Endothelial cell of umbilical vein (primary cell): ENCODE measurements at regions of chr14 and their contacts with region 1.

Region 1: DNA sequence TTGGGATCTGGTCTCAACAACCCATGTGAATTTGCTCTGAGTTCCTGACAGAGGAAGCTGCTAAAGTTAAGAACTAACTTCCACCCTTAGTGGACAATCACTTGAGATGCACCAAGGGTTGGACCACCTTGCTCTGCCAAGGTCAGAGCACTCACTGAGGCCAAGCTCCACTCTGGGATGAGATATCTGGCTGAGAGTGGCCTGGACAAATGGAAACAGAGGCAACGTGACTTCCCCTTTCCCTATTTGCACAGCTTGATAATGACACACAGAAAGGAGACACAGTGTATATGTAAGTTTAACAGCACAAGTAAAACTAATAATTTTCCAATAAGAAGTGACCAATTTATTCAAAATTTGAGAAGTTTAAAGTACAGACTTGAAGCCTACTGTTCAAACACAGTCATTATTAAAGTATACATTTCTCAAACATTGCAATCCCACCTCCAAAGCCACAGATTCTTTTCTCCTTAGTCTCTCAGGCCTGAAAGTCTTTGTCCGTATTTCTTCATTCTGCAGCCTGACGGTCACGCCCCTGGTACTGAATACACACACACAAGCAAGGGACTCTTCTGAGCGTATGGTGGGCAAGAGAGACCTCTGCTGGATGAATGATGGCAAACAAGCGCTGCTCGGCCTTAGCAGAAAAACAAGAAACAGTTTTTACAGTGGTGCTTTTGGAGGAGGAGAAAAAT is 28.6 kb downstream of the TMEM30B start:
- DNase-seq: peak; percentile 90
- H3K4me3 ChIP-seq: no peak overlapping the region
- H3K27ac ChIP-seq: no peak overlapping the region
- H3K4me1 ChIP-seq: peaks cover 27% of the 10 kb centered on the region
- H3K27me3 ChIP-seq: peaks cover 0 to 2% of the 10 kb centered on the region in 2 experiments
- CTCF ChIP-seq: peak; percentile 77 to 91
- POLR2A ChIP-seq: no peak

Region 2: DNA sequence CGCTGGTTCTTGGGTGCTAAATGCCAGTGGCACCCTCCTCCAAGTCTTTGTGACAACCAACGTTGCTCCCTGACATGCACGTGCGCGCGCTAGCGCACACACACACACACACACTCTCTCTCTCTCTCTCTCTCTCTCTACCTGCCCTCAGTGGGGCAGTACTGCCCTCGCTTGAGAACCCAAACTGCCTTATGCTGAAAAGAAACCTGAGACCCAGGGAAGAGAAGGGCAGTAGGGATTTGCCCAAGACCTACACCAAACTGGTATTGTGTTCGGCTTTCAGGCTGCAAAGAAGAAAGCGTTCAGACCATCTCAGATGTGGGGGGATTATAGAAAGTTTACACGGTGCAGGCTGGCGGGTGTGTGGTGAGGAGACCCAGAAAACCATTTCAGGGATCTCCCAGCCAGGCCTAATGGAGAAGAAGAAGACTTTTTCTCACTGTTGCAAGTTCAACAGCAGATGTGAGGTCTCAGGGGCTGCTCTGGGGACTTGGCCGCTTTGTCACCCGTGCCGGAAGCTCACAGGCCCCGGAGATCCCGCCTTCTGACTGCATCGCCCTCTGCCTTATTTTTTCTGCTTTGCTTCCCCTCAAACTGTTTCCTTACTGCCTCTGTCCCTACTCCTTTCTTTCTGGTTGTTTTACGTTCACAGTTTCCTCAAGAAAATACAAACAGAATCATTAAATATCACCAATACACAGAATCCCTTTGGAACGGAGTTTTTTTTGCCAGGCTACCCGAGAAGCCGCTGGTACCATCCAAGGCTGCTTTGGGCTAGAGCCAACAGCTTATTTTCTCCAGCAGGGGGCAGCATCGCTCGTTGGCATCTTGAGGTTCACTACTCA is 921.1 kb before region 1 on chr14:
- CTCF ChIA-PET with region 1: interaction called, 20 read pairs
- POLR2A ChIA-PET with region 1: no interaction called
- dilution Hi-C with region 1: no loop called
- intact Hi-C with region 1: no loop called
- DNase-seq: peak; percentile 78
- H3K4me3 ChIP-seq: peak overlapping the region; percentile 30 to 66 (median 41)
- H3K27ac ChIP-seq: no peak overlapping the region
- H3K4me1 ChIP-seq: peaks cover 2% of the 10 kb centered on the region
- H3K27me3 ChIP-seq: peaks cover 36 to 38% of the 10 kb centered on the region in 2 experiments
- CTCF ChIP-seq: peak; percentile 82 to 84
- POLR2A ChIP-seq: no peak

Region 3: GRCh38 chr14:60622917-60623257 is 629.6 kb before region 1 on chr14:
- CTCF ChIA-PET with region 1: interaction called, 172 read pairs
- POLR2A ChIA-PET with region 1: no interaction called
- dilution Hi-C with region 1: loop called (anchors 25 kb)
- intact Hi-C with region 1: loop called (anchors 1 kb)
- DNase-seq: no peak
- H3K4me3 ChIP-seq: no peak overlapping the region
- H3K27ac ChIP-seq: no peak overlapping the region
- H3K4me1 ChIP-seq: peaks cover 10% of the 10 kb centered on the region
- H3K27me3 ChIP-seq: peaks cover 0 to 2% of the 10 kb centered on the region in 2 experiments
- CTCF ChIP-seq: no peak
- POLR2A ChIP-seq: no peak

Region 4: GRCh38 chr14:60724137-60724619 is 528.3 kb before region 1 on chr14 and contains the start of gene SIX4:
- CTCF ChIA-PET with region 1: interaction called, 4 read pairs
- POLR2A ChIA-PET with region 1: no interaction called
- dilution Hi-C with region 1: no loop called
- intact Hi-C with region 1: loop called (anchors 1 kb)
- DNase-seq: peak; percentile 85
- H3K4me3 ChIP-seq: peak within 1 kb of the TSS; percentile 81 to 94 (median 86)
- H3K27ac ChIP-seq: peak within 1 kb of the TSS; percentile 57
- H3K4me1 ChIP-seq: peaks cover 8% of the 10 kb centered on the region
- H3K27me3 ChIP-seq: peaks cover 9 to 16% of the 10 kb centered on the region in 2 experiments
- CTCF ChIP-seq: no peak
- POLR2A ChIP-seq: peak; percentile 75
- total RNA-seq, gene SIX4: 4.7 and 7.5 TPM in 2 replicates

Region 5: GRCh38 chr14:60926002-60926401 is 326.5 kb before region 1 on chr14:
- CTCF ChIA-PET with region 1: no interaction called
- POLR2A ChIA-PET with region 1: no interaction called
- dilution Hi-C with region 1: no loop called
- intact Hi-C with region 1: loop called (anchors 10 kb)
- DNase-seq: no peak
- H3K4me3 ChIP-seq: no peak overlapping the region
- H3K27ac ChIP-seq: peak overlapping the region; percentile 12
- H3K4me1 ChIP-seq: peaks cover 12% of the 10 kb centered on the region
- H3K27me3 ChIP-seq: no peaks in the 10 kb centered on the region
- CTCF ChIP-seq: no peak
- POLR2A ChIP-seq: no peak

Region 6: GRCh38 chr14:61103481-61104339 is 148.8 kb before region 1 on chr14:
- CTCF ChIA-PET with region 1: no interaction called
- POLR2A ChIA-PET with region 1: no interaction called
- dilution Hi-C with region 1: no loop called
- intact Hi-C with region 1: loop called (anchors 2 kb)
- DNase-seq: peak; percentile 94
- H3K4me3 ChIP-seq: peak overlapping the region in 1 of 3 experiments; percentile 17
- H3K27ac ChIP-seq: peak overlapping the region; percentile 100
- H3K4me1 ChIP-seq: peaks cover 66% of the 10 kb centered on the region
- H3K27me3 ChIP-seq: no peaks in the 10 kb centered on the region
- CTCF ChIP-seq: no peak
- POLR2A ChIP-seq: peak; percentile 52